ENCODE measurements at regions of chr5 and their contacts with region 1.

Region 1: DNA sequence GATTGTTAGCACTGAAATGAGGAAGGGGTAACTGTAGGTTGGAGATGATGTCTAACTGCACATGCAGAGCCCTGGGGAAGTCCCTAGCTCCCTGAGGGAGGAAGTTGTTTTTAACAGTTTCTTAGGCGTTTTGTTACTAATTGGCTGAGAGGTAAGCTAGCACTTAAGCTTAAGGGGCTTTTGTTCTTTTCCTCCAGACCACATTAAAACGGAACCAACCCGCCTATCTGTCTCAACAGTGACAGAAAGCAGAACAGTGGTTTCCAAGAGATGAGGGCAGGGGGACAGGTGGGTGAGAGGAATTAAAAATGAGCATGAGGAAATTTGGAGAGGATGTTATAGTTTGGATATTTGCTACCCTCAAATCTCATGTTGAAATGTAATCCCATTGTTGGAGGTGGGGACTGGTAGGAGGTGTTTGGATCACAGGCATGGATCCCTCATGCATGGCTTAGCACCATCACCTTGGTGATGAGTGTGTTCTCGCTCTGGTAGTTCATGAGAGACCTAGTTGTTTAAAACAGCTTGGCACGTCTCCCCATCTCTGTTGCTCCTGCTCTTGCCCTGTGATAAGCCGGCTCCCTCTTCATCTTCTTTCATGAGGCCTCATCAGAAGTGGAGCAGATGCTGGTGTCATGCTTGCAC is 38.9 kb downstream of the LYRM7 start:
- DNase-seq: peak; percentile 11 to 91 (median 84)
- ATAC-seq: peak; percentile 98
- H3K4me3 ChIP-seq: peak overlapping the region; percentile 21
- H3K4me3 Mint-ChIP-seq: peak overlapping the region; percentile 72 to 90 (median 80)
- H3K27ac ChIP-seq: peak overlapping the region; percentile 77
- H3K27ac Mint-ChIP-seq: peak overlapping the region; percentile 91 to 98 (median 96)
- H3K4me1 ChIP-seq: peaks cover 18 to 37% of the 10 kb centered on the region in 2 donors
- H3K4me1 Mint-ChIP-seq: peaks cover 42 to 75% (median 61%) of the 10 kb centered on the region in 7 donors
- H3K27me3 ChIP-seq: no peaks in the 10 kb centered on the region
- H3K27me3 Mint-ChIP-seq: no peaks in the 10 kb centered on the region

Region 2: GRCh38 chr5:131165119-131165727 is 44.4 kb before region 1 on chr5 and contains the start of gene HINT1:
- CTCF ChIA-PET with region 1: interaction called, 4 read pairs
- POLR2A ChIA-PET with region 1: interaction called, 5 read pairs
- intact Hi-C with region 1: loop called (anchors 1 kb)
- DNase-seq: peak; percentile 86 to 98 (median 93)
- ATAC-seq: peak; percentile 89
- H3K4me3 ChIP-seq: peak within 1 kb of the TSS; percentile 97
- H3K4me3 Mint-ChIP-seq: peak within 1 kb of the TSS; percentile 93 to 98 (median 97)
- H3K27ac ChIP-seq: peak within 1 kb of the TSS; percentile 91
- H3K27ac Mint-ChIP-seq: peak within 1 kb of the TSS; percentile 95 to 99 (median 98)
- H3K4me1 ChIP-seq: peaks cover 15 to 23% of the 10 kb centered on the region in 2 donors
- H3K4me1 Mint-ChIP-seq: peaks cover 28 to 74% (median 61%) of the 10 kb centered on the region in 7 donors
- H3K27me3 ChIP-seq: no peaks in the 10 kb centered on the region
- H3K27me3 Mint-ChIP-seq: no peaks in the 10 kb centered on the region
- total RNA-seq, gene HINT1: 172 to 319 (median 233) TPM

Region 3: GRCh38 chr5:131195696-131196095 is 13.9 kb before region 1 on chr5:
- CTCF ChIA-PET with region 1: interaction called, 3 read pairs
- POLR2A ChIA-PET with region 1: interaction called, 3 read pairs
- intact Hi-C with region 1: loop called in 1 of 2 experiments (anchors 1 kb)
- DNase-seq: no peak
- ATAC-seq: no peak
- H3K4me3 ChIP-seq: no peak overlapping the region
- H3K4me3 Mint-ChIP-seq: no peak overlapping the region
- H3K27ac ChIP-seq: no peak overlapping the region
- H3K27ac Mint-ChIP-seq: peak overlapping the region in 2 of 9 donors; percentile 33 to 69
- H3K4me1 ChIP-seq: no peaks in the 10 kb centered on the region
- H3K4me1 Mint-ChIP-seq: peaks cover 9 to 25% (median 13%) of the 10 kb centered on the region in 7 donors
- H3K27me3 ChIP-seq: no peaks in the 10 kb centered on the region
- H3K27me3 Mint-ChIP-seq: no peaks in the 10 kb centered on the region

Region 4: DNA sequence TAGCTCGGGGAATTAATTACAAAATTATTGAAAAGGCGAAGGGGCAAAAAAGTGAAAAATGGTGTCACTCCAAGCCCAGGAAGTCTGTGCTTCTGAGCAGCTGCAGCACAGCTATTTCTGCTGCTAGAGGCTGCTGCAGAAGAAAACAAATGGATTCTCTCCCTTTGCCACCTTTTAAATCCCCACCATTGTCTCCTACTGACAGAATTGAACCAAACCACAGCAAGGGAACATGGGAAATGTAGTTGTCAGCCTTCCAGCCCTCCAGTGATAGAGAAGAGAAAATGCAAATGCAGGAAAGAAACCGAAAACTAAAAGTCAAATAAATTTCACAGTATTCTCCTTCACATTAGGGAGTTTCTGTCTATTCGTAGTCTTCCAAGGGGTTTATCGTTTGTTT is 20.8 kb after region 1 on chr5:
- CTCF ChIA-PET with region 1: interaction called, 4 read pairs
- POLR2A ChIA-PET with region 1: interaction called, 3 read pairs
- intact Hi-C with region 1: loop called in 1 of 2 experiments (anchors 2 kb)
- DNase-seq: no peak
- ATAC-seq: no peak
- H3K4me3 ChIP-seq: no peak overlapping the region
- H3K4me3 Mint-ChIP-seq: peak overlapping the region in 3 of 10 donors; percentile 11 to 45 (median 24)
- H3K27ac ChIP-seq: no peak overlapping the region
- H3K27ac Mint-ChIP-seq: peak overlapping the region in 7 of 9 donors; percentile 26 to 72 (median 47)
- H3K4me1 ChIP-seq: peaks cover 0 to 9% of the 10 kb centered on the region in 2 donors
- H3K4me1 Mint-ChIP-seq: peaks cover 6 to 32% (median 19%) of the 10 kb centered on the region in 7 donors
- H3K27me3 ChIP-seq: no peaks in the 10 kb centered on the region
- H3K27me3 Mint-ChIP-seq: no peaks in the 10 kb centered on the region

Region 5: DNA sequence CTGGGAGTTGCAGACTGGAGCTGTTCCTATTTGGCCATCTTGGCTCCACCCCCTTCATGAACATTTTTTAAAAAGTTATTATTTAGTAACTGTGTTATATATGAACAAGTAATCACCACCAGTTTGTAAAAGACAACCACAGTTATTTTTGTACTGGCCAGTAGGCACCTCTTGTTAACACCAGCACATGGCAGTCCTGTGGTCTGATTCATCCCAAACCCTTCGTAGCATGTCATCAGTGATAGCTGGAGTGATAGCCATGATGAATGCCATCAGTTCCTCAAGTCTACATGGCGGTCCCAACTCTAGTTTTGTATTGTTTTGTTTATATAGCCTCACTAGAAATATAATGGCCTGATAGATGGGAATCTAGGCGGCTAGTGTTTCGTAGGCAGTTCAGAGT is 128.4 kb after region 1 on chr5:
- CTCF ChIA-PET with region 1: no interaction called
- POLR2A ChIA-PET with region 1: no interaction called
- intact Hi-C with region 1: no loop called
- DNase-seq: no peak
- ATAC-seq: no peak
- H3K4me3 ChIP-seq: no peak overlapping the region
- H3K4me3 Mint-ChIP-seq: peak overlapping the region in 7 of 10 donors; percentile 15 to 72 (median 37)
- H3K27ac ChIP-seq: no peak overlapping the region
- H3K27ac Mint-ChIP-seq: peak overlapping the region in 8 of 9 donors; percentile 8 to 58 (median 50)
- H3K4me1 ChIP-seq: peaks cover 2 to 40% of the 10 kb centered on the region in 2 donors
- H3K4me1 Mint-ChIP-seq: peaks cover 36 to 92% (median 73%) of the 10 kb centered on the region in 7 donors
- H3K27me3 ChIP-seq: no peaks in the 10 kb centered on the region
- H3K27me3 Mint-ChIP-seq: no peaks in the 10 kb centered on the region

Region 6: GRCh38 chr5:131357739-131358561 is 148.3 kb after region 1 on chr5:
- CTCF ChIA-PET with region 1: interaction called, 4 read pairs
- POLR2A ChIA-PET with region 1: no interaction called
- intact Hi-C with region 1: loop called in 1 of 2 experiments (anchors 1 kb)
- DNase-seq: peak in 6 of 9 donors; percentile 23 to 52 (median 40)
- ATAC-seq: peak; percentile 73
- H3K4me3 ChIP-seq: no peak overlapping the region
- H3K4me3 Mint-ChIP-seq: peak overlapping the region; percentile 14 to 75 (median 56)
- H3K27ac ChIP-seq: peak overlapping the region; percentile 58
- H3K27ac Mint-ChIP-seq: peak overlapping the region; percentile 82 to 93 (median 86)
- H3K4me1 ChIP-seq: peaks cover 37 to 41% of the 10 kb centered on the region in 2 donors
- H3K4me1 Mint-ChIP-seq: peaks cover 32 to 83% (median 75%) of the 10 kb centered on the region in 7 donors
- H3K27me3 ChIP-seq: no peaks in the 10 kb centered on the region
- H3K27me3 Mint-ChIP-seq: no peaks in the 10 kb centered on the region

Region 7: DNA sequence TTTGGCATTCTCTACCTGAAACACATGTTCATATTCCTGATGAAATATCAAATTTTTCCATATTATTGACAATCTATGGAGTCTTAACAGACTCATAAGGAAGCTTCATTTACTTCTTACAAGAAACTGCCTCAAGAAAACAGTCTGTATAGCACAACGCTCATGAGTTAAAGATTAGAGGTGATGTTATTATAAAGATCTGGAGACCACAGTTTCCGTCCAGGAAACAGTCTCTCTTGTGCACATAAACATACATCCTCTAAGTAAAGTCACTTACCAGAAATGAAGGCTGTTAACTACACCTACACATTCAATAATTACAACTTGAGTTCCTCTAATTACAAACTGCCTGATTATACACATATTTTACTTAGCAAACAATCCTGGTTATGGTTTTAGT is 338.5 kb after region 1 on chr5:
- CTCF ChIA-PET with region 1: no interaction called
- POLR2A ChIA-PET with region 1: no interaction called
- intact Hi-C with region 1: no loop called
- DNase-seq: peak in 7 of 9 donors; percentile 60 to 82 (median 68)
- ATAC-seq: peak; percentile 97
- H3K4me3 ChIP-seq: peak overlapping the region; percentile 63
- H3K4me3 Mint-ChIP-seq: peak overlapping the region; percentile 93 to 100 (median 98)
- H3K27ac ChIP-seq: peak overlapping the region; percentile 83
- H3K27ac Mint-ChIP-seq: peak overlapping the region; percentile 92 to 99 (median 97)
- H3K4me1 ChIP-seq: peaks cover 6 to 44% of the 10 kb centered on the region in 2 donors
- H3K4me1 Mint-ChIP-seq: peaks cover 28 to 71% (median 58%) of the 10 kb centered on the region in 7 donors
- H3K27me3 ChIP-seq: no peaks in the 10 kb centered on the region
- H3K27me3 Mint-ChIP-seq: no peaks in the 10 kb centered on the region

Region 8: GRCh38 chr5:132238169-132238744 is 1028.6 kb after region 1 on chr5:
- CTCF ChIA-PET with region 1: no interaction called
- POLR2A ChIA-PET with region 1: no interaction called
- intact Hi-C with region 1: no loop called
- DNase-seq: peak in 8 of 9 donors; percentile 34 to 76 (median 44)
- ATAC-seq: peak; percentile 70
- H3K4me3 ChIP-seq: no peak overlapping the region
- H3K4me3 Mint-ChIP-seq: no peak overlapping the region
- H3K27ac ChIP-seq: no peak overlapping the region
- H3K27ac Mint-ChIP-seq: no peak overlapping the region
- H3K4me1 ChIP-seq: no peaks in the 10 kb centered on the region
- H3K4me1 Mint-ChIP-seq: peaks cover 0 to 2% (median 0%) of the 10 kb centered on the region in 7 donors
- H3K27me3 ChIP-seq: no peaks in the 10 kb centered on the region
- H3K27me3 Mint-ChIP-seq: peaks cover 0 to 21% (median 4%) of the 10 kb centered on the region in 5 donors